MCF 10A (cell line): ENCODE measurements at regions of chr1 and their contacts with region 1.

Region 1: DNA sequence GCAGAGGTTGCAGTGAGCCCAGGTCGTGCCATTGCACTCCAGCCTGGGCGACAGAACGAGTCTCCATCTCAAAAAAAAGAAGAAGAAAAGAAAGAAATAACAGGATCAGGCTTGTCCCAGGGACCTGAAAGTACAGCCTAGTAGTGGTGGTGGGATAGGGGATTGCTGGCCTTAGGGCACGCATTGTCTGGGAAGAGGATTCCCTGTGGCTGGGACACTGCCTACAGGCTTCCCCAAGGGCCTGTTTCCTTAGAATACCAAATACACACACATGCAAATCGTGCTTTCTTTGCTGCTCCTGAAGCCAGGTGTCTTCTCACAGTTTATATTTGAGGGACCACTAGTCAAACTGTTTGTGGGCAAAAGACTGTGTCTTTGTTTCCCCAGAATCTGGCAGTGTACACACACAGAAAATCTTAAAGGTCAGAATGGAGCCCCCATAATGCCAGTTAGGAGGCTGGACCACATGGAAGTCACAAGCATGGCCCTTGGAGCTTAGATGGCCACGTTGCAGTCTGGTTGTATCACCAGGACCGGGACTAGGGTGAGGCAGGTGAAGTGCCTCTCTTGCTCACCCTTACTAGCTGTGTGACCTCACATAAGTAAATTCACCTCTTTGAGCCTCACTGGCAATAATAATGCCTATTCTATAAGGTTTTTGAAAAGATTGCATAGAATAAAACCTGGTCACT is 12.7 kb upstream of the ASAP3 start:
- DNase-seq: no peak
- H3K4me3 Mint-ChIP-seq: no peak overlapping the region
- H3K27ac Mint-ChIP-seq: no peak overlapping the region
- H3K4me1 Mint-ChIP-seq: no peaks in the 10 kb centered on the region
- H3K27me3 Mint-ChIP-seq: peaks cover 5% of the 10 kb centered on the region
- CTCF ChIP-seq: no peak

Region 2: DNA sequence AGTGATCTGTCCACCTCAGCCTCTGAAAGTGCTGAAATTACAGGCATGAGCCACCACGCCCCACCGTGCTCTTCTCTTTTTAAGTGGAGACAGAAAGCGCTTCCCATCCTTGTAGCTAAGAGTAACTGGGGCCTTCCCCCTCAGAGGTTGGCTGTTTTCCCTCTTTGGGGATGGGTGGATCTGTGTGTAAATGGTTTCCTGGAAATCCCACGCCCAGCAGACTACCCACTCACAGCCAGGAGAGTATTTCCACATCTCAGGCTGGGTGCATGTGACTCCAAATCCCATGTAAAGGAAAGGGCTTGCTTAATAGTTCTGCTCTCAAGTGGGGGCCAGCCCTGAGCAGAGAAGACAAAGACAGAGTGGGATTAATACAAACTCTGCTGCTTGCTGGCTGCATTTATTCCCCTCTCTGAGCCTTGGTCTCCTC is 52.5 kb before region 1 on chr1:
- CTCF ChIA-PET with region 1: interaction called, 13 read pairs
- POLR2A ChIA-PET with region 1: no interaction called
- intact Hi-C with region 1: no loop called
- DNase-seq: peak; percentile 81
- H3K4me3 Mint-ChIP-seq: no peak overlapping the region
- H3K27ac Mint-ChIP-seq: no peak overlapping the region
- H3K4me1 Mint-ChIP-seq: peaks cover 6% of the 10 kb centered on the region
- H3K27me3 Mint-ChIP-seq: no peaks in the 10 kb centered on the region
- CTCF ChIP-seq: no peak

Region 3: GRCh38 chr1:23456226-23456625 is 40.4 kb before region 1 on chr1:
- CTCF ChIA-PET with region 1: no interaction called
- POLR2A ChIA-PET with region 1: no interaction called
- intact Hi-C with region 1: no loop called
- DNase-seq: peak; percentile 77
- H3K4me3 Mint-ChIP-seq: no peak overlapping the region
- H3K27ac Mint-ChIP-seq: peak overlapping the region; percentile 70
- H3K4me1 Mint-ChIP-seq: peaks cover 65% of the 10 kb centered on the region
- H3K27me3 Mint-ChIP-seq: no peaks in the 10 kb centered on the region
- CTCF ChIP-seq: no peak

Region 4: DNA sequence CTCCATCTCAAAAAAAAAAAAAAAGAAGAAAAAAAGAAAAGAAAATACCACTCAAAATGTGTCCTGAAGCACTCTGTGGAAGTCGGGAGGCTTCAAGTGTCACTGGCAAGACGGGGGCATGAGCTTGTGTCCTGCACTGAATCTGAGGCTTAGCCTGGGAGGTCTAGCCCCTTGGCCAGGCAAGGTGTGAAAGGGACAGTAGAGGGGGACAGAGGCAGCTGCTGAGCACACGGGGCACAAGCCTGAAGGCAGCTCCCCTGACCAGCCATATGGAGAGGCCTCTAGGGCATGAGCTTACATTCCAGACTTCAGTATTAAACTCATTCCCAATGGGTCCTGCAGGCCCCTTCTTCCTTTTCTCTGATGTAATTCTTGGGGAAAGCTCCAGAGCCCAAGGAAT is 10.9 kb after region 1 on chr1:
- CTCF ChIA-PET with region 1: interaction called, 19 read pairs
- POLR2A ChIA-PET with region 1: interaction called, 4 read pairs
- intact Hi-C with region 1: no loop called
- DNase-seq: no peak
- H3K4me3 Mint-ChIP-seq: no peak overlapping the region
- H3K27ac Mint-ChIP-seq: no peak overlapping the region
- H3K4me1 Mint-ChIP-seq: no peaks in the 10 kb centered on the region
- H3K27me3 Mint-ChIP-seq: no peaks in the 10 kb centered on the region
- CTCF ChIP-seq: no peak

Region 5: GRCh38 chr1:23524716-23525401 is 28.2 kb after region 1 on chr1:
- CTCF ChIA-PET with region 1: interaction called, 39 read pairs
- POLR2A ChIA-PET with region 1: interaction called, 5 read pairs
- intact Hi-C with region 1: no loop called
- DNase-seq: no peak
- H3K4me3 Mint-ChIP-seq: no peak overlapping the region
- H3K27ac Mint-ChIP-seq: no peak overlapping the region
- H3K4me1 Mint-ChIP-seq: peaks cover 19% of the 10 kb centered on the region
- H3K27me3 Mint-ChIP-seq: no peaks in the 10 kb centered on the region
- CTCF ChIP-seq: no peak

Region 6: DNA sequence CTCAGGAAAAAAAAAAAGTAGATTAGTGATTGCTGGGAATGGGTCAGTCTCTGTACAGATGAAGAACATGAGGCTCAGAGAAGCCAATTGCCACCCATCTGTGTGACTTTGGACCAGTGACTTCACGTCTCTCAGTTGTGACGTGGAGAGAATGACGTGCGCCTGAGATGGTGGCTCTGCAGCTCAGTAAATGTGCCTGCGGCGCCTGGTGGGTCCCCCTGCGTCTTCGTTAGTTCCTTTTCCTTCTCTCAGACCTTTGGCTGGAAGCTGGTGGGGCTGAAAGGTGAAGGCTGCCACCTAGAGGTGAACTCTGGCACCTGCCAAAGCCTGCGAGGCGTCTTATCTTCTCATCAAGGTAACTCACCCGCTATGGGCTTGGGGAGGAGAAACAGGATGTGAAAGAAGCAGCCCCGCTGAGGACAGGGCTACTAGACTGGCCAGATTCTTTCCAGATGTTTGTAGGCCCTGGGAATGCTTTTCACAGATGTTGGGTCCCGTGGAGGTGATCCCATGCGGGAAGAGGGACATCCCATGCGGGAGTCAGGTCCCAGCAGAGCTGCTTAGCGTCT is 43.1 kb after region 1 on chr1:
- CTCF ChIA-PET with region 1: interaction called, 178 read pairs
- POLR2A ChIA-PET with region 1: interaction called, 26 read pairs
- intact Hi-C with region 1: loop called (anchors 1 kb)
- DNase-seq: peak; percentile 90
- H3K4me3 Mint-ChIP-seq: no peak overlapping the region
- H3K27ac Mint-ChIP-seq: no peak overlapping the region
- H3K4me1 Mint-ChIP-seq: peaks cover 18% of the 10 kb centered on the region
- H3K27me3 Mint-ChIP-seq: no peaks in the 10 kb centered on the region
- CTCF ChIP-seq: peak; percentile 91